Brain microvascular endothelial cell (primary cell): ENCODE measurements at regions of chr6 and their contacts with region 1.

Region 1: GRCh38 chr6:163413345-163414116 is 987 bp upstream of the QKI start:
- DNase-seq: peak; percentile 79
- H3K4me3 ChIP-seq: peak overlapping the region; percentile 88
- H3K27ac ChIP-seq: peak overlapping the region; percentile 96
- H3K27me3 ChIP-seq: no peaks in the 10 kb centered on the region
- CTCF ChIP-seq: no peak

Region 2: GRCh38 chr6:162856885-162857284 is 556.6 kb before region 1 on chr6:
- in situ Hi-C with region 1: loop called (anchors 25 kb)
- DNase-seq: peak; percentile 80
- H3K4me3 ChIP-seq: peak overlapping the region; percentile 28
- H3K27ac ChIP-seq: no peak overlapping the region
- H3K27me3 ChIP-seq: no peaks in the 10 kb centered on the region
- CTCF ChIP-seq: peak; percentile 81

Region 3: GRCh38 chr6:163180874-163181541 is 232.5 kb before region 1 on chr6:
- in situ Hi-C with region 1: loop called (anchors 25 kb)
- DNase-seq: peak; percentile 63
- H3K4me3 ChIP-seq: no peak overlapping the region
- H3K27ac ChIP-seq: no peak overlapping the region
- H3K27me3 ChIP-seq: no peaks in the 10 kb centered on the region
- CTCF ChIP-seq: peak; percentile 91

Region 4: DNA sequence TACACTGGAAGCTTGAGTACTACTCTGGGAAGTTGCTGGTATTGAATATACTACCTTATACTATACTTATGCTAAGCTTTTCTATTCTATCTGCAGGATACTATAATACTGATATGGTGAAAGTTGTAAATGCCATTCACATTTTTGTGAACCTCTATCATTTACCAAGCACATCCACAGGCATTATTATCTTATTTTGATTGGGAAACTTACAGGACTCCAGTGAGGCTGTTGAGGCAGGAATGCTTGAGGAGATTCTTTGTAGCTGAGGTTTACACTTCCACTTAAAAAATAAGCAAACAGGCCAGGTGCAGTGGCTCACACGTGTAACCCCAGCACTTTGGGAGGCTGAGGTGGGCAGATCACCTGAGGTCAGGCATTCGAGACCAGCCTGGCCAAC is 443.9 kb after region 1 on chr6:
- in situ Hi-C with region 1: no loop called
- DNase-seq: no peak
- H3K4me3 ChIP-seq: no peak overlapping the region
- H3K27ac ChIP-seq: no peak overlapping the region
- H3K27me3 ChIP-seq: no peaks in the 10 kb centered on the region
- CTCF ChIP-seq: no peak